ENCODE measurements at regions of chr3 and their contacts with region 1.

Region 1: DNA sequence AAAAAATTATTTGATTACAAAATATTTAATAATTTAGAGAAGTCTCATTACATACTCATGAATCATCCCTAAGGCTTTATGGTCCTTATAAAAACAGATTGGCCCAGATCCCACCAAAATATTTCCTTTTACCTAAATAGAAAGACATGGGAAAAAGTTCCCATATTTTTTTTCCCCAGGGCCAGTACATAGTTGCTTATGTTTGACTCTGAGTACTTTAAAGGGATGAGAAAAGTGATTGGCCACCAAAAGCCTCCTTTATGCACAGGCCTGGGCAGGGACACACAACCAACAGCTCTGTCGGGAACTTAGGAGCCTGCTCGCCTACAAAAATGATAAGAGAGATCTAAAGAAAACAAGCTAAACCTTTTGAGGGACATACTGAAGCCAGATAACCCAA is 22.3 kb downstream of the KCNAB1 start:
- DNase-seq: no peak
- ATAC-seq: peak; percentile 75
- H3K4me3 ChIP-seq: peak overlapping the region in 1 of 2 donors; percentile 79
- H3K27ac ChIP-seq: peak overlapping the region; percentile 74 to 90
- H3K4me1 ChIP-seq: peaks cover 5% of the 10 kb centered on the region in 2 donors
- H3K27me3 ChIP-seq: no peaks in the 10 kb centered on the region

Region 2: GRCh38 chr3:156106721-156107373 is 35.9 kb before region 1 on chr3:
- intact Hi-C with region 1: loop called in 1 of 2 experiments (anchors 5 kb)
- DNase-seq: no peak
- ATAC-seq: no peak
- H3K4me3 ChIP-seq: no peak overlapping the region
- H3K27ac ChIP-seq: no peak overlapping the region
- H3K4me1 ChIP-seq: peaks cover 4 to 8% of the 10 kb centered on the region in 2 donors
- H3K27me3 ChIP-seq: no peaks in the 10 kb centered on the region

Measured in aorta (tissue), 5 donors.